Left ventricle myocardium superior (tissue), 1 donor: ENCODE measurements at regions of chr20 and their contacts with region 1.

Region 1: DNA sequence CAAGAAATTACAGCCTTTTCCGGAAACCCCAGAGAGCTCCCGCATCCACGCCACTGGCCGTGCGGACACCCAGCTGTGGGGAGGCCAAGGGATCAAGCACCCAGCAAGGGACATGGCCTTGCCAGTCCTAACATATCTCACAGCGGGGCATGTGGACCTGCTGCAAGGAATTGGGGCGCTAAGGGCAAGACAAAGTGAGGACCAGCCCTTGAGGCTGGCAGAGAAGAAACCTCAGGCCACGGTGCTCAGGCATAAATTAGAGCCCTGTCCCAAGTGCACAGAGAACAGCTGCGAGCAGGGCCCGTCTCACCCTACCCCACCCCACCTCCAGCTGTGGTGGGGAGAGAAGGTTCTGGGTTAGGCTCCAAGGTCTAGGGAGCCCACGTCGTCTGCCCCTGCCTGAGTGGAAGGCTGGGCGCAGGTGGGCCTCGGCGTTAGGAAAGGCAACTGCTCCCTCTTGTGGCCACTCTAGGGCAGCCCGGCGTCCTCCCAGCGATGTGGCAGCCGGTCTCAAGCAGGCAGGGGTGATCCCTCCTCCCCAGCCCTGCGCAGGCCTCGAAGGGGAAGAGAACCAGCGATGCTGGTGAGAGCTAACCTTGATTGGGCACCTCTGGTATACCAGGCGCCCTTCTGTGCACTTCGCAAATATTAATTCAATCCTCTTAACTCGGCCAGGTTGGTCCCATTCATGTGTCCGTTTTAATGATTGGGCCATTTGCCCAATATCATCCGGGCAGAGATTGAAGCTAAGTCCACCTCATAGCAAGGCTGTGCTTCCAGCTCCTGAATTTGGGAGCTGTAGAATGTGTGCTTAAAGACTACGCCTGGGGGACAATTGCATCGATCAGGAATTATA is 235.8 kb downstream of the NFATC2 start:
- DNase-seq: peak; percentile 82
- ATAC-seq: peak; percentile 95

Region 2: GRCh38 chr20:51211191-51211590 is 95.5 kb before region 1 on chr20:
- intact Hi-C with region 1: loop called (anchors 10 kb)
- DNase-seq: no peak
- ATAC-seq: no peak

Region 3: DNA sequence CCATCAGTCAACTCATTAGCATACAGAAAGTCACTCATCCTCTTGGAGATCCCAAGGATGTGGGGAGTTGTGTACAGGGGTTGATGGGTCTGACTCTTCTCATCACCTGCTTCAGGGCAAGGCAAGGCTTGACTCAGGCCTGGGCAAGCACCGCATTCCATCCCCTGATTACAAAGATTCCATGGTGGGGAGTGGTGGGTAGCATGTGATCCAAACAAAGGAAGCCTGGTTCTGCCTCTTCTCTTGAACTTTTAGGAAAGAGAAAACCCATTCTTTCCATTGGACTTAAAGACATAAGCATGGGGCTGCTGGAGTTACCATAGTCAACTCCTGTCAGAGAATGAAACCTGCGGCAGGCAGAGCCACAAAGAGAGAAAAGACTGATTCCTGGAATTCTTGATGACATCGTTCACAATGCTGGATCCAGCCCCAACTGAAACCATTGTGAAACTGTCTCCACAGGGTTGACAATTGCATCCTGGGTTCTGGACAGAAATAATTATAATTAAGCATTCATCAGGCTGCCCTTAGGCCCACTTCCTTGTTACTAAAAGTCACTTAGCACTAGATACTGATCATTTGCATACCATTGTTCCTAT is 48.0 kb before region 1 on chr20:
- intact Hi-C with region 1: no loop called
- DNase-seq: no peak
- ATAC-seq: no peak